Activated CD4-positive, alpha-beta T cell treated with anti-CD3 and anti-CD28 coated beads, Interleukin-2, amount 10 ng/mL, durations not matched to agents 24 days and 14 days (primary cell): ENCODE measurements at regions of chr1 and their contacts with region 1.

Region 1: DNA sequence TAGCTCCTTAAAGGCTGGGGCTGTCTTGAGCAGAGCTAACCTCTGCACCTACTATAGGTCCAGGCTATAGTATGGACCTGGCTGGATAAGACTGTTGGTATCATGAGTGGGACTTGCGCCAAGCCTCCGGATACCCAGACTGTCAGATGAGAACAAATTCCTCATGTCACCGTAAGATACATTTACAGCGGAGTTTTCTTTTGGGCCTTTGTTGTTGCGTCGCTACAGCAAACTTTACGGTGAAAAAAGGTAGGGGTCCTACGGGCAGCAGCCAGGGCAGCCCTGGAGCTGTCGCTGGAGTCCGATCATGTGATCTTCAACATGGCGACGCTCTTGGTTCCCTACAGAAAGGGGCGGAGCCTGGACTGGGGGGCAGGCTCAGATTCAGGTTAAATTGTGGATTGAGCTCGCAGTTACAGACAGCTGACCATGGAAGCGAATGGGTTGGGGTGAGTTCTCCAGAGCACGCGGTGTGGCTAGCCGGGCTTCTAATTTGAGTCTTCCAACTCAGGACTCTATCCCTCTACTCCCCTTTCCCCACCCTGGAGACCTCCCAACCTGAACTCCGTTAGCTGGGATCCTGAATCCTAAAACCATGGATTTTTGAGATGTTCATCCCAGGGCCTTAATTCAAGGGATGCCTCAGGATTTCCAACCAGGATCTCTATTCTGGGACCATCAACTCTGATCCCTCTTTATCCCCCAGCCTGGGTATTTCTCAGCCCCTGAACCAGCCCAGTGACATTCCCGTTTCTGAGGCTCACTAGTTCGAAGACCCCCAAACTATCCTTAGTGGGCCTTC is at the start of gene UROD:
- DNase-seq: peak; percentile 97
- H3K4me3 Mint-ChIP-seq: peak within 1 kb of the TSS; percentile 85
- H3K27ac Mint-ChIP-seq: peak within 1 kb of the TSS; percentile 91
- H3K4me1 Mint-ChIP-seq: peaks cover 52% of the 10 kb centered on the region
- H3K27me3 Mint-ChIP-seq: no peaks in the 10 kb centered on the region
- total RNA-seq, gene UROD: 96.0 and 97.7 TPM in 2 replicates

Region 2: DNA sequence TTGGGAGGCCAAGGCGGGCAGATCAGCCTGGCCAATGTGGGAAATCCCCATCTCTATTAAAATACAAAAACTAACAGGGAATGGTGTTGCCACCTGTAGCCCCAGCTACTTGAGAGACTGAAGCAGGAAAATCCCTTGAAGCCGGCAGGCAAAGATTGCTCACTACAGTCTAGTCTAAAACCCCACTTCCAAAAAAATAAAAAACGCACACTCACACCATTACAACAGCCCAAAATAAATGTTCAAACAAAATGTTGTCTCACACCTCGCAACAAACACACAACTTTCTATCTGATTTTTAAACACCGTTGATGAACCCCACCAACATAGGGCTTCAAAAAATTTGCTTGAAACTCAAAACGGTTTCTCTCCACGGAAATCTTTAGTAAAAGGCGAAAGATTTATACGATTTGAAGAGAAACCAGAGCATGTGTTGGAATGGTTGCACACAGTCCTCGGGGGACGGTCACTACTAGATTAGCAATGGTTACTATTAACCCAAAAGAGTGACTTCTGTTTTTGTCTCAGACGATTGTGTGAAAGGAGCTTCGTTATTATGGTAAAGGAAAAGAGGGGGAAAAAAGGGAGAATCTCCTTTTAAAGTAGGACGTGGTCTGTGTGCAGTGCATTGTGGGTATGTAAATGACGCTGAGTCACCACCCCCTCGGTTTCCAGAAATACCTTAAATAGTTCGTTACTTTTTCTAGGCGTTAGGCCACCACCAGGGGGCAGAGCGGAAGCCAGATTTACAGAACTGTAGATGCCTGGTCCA is 281.1 kb before region 1 on chr1 and contains the start of gene RNU5D-1:
- intact Hi-C with region 1: loop called (anchors 2 kb)
- DNase-seq: peak; percentile 97
- H3K4me3 Mint-ChIP-seq: peak within 1 kb of the TSS; percentile 65
- H3K27ac Mint-ChIP-seq: peak within 1 kb of the TSS; percentile 98
- H3K4me1 Mint-ChIP-seq: peaks cover 32% of the 10 kb centered on the region
- H3K27me3 Mint-ChIP-seq: no peaks in the 10 kb centered on the region
- total RNA-seq, gene RNU5D-1: not detected in 2 replicates

Region 3: DNA sequence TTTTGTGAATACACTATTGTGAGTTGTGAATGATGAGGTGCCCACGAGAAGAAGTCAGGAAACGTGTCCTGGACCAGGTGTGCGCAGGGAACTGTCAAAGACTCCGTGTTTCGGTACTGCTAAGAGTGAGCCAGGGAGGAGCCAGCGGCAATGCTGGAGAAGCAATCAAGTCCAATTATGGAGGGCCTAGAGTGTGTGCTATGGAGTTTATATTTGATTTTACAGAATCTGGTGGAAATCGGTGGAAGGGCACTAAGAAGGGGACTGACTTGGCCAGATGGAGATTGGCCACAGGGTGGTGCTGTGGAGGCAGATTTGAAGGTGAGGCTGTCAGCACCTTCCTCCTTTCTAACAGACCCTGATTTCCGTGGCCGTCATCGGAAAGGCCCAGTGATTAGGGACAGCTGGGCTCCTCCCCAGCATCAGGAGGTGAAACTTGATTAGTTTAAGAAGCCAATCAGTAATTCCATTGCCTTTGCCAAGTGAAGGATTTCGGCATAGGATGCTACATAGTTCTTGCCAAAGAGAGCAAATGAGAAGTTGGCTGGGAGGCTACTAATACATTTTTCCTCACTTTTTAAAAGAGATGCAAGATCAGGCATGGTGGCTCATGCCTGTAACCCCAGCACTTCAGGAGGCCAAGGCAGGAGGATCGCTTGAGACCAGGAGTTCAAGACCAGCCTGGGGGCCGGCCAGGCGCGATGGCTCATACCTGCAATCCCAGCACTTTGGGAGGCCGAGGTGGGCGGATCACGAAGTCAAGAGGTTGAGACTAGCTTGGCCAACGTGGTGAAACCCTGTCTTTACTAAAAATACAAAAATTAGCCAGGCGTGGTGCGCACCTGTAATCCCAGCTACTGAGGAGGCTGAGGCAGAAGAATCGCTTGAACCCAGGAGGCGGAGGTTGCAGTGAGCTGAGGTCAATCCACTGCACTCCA is 176.0 kb before region 1 on chr1:
- intact Hi-C with region 1: loop called (anchors 2 kb)
- DNase-seq: peak; percentile 95
- H3K4me3 Mint-ChIP-seq: no peak overlapping the region
- H3K27ac Mint-ChIP-seq: peak overlapping the region; percentile 39
- H3K4me1 Mint-ChIP-seq: peaks cover 13% of the 10 kb centered on the region
- H3K27me3 Mint-ChIP-seq: no peaks in the 10 kb centered on the region

Region 4: GRCh38 chr1:45205910-45206721 is 194.1 kb after region 1 on chr1 and contains the start of gene ZSWIM5:
- intact Hi-C with region 1: loop called (anchors 2 kb)
- DNase-seq: peak; percentile 87
- H3K4me3 Mint-ChIP-seq: peak within 1 kb of the TSS; percentile 90
- H3K27ac Mint-ChIP-seq: peak within 1 kb of the TSS; percentile 57
- H3K4me1 Mint-ChIP-seq: peaks cover 12% of the 10 kb centered on the region
- H3K27me3 Mint-ChIP-seq: peaks cover 51% of the 10 kb centered on the region
- total RNA-seq, gene ZSWIM5: 0.12 and 0.14 TPM in 2 replicates

Region 5: DNA sequence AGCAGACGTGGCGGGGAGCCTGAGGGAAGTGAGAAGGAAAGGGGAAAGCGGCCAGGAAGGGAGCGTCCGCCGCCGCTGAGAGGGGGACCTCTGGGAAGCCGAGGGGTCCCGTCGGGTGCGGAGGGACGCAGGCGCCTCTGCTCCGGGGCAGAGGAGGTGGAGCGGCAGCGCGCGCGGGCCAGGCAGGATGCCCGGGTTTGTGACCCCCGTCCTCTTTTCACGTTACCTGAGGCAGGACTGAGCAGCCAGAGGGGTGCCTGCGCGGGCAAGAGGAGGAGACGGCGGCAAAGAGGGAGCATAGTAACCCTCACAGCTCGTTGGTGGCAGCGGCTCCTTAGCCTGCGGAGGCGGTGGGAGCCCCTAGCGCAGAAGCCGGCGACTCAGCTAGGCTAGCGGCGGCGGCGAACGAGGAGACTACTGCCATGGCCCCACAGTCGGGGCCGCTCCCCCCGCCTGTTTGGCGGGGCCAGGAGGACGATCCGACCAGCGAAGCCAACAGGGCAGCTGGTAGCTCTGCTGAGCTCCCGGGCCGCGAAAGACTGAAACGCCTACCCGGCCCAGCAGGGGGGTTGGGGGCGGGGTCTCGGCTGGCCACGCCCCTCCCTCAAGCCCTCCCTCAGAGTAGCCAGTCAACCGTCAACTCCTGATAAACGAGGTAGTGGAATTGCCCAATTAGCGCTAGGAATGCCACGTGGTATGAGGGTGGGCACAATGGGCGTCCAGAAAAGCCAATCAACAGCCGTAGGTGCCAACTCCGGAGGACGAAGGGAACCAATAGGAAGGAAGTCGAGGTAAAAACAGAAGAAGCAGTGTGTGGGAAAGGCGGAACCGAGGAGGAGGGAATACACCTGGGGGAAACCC is 478.8 kb after region 1 on chr1 and contains the start of gene TESK2:
- intact Hi-C with region 1: loop called (anchors 1 kb)
- DNase-seq: peak; percentile 99
- H3K4me3 Mint-ChIP-seq: no peak within 1 kb of the TSS
- H3K27ac Mint-ChIP-seq: no peak within 1 kb of the TSS
- H3K4me1 Mint-ChIP-seq: peaks cover 13% of the 10 kb centered on the region
- H3K27me3 Mint-ChIP-seq: peaks cover 11% of the 10 kb centered on the region
- total RNA-seq, gene TESK2: 1.7 and 2.6 TPM in 2 replicates